ENCODE measurements at regions of chr19 and their contacts with region 1.

Region 1: GRCh38 chr19:1211443-1212234 is 6.1 kb downstream of the STK11 start:
- DNase-seq: no peak
- CTCF ChIP-seq: no peak

Region 2: DNA sequence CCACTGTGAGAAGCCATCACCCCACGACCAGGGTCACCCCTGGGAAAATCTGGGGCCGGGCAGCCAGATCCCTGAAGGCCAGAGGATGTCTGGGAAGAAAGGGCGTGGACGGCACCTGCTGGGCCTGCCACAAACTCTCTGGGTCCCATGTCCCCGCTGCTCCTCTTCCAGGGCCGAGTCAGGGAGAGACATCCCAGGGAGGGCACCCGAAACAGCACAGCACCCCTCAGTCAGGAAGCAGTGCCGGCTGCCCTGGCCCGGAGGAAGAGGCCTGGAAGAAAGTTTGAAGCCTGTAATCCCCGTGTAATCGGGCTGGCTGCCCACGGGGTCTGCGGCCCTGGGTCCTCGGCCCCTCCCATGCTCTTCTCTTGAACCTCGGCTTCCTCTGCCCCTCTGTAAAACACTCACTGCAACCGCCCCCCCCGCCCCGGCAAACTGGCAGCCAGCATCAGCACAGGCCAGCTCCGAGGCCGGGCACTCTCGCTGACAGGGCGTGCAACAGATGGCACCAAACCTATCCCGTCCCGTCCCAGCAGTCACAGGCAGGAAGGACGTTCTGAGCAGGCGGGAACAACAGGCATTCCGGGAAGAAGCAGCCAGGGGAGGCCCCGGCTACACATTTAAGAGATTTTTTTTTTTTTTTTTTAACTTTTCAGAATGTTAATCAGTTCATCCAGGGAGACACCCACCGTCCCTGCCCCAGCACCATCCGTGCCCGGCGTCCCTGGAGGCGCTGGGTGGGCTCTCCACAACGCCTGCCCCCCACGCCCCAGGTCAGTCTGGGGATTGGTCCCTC is 39.1 kb before region 1 on chr19:
- CTCF ChIA-PET with region 1: no interaction called
- POLR2A ChIA-PET with region 1: no interaction called
- DNase-seq: no peak
- CTCF ChIP-seq: no peak

Region 3: GRCh38 chr19:1223018-1223855 is 11.6 kb after region 1 on chr19:
- CTCF ChIA-PET with region 1: interaction called, 11 read pairs
- POLR2A ChIA-PET with region 1: no interaction called
- DNase-seq: peak; percentile 73
- CTCF ChIP-seq: peak; percentile 53

Region 4: GRCh38 chr19:1445185-1445931 is 233.7 kb after region 1 on chr19:
- CTCF ChIA-PET with region 1: no interaction called
- POLR2A ChIA-PET with region 1: no interaction called
- DNase-seq: peak; percentile 94
- CTCF ChIP-seq: peak; percentile 96